Aorta (tissue), 5 donors: ENCODE measurements at regions of chr5 and their contacts with region 1.

Region 1: GRCh38 chr5:140710899-140711552 is 10.8 kb downstream of the ZMAT2 start:
- DNase-seq: peak; percentile 93 to 95
- ATAC-seq: peak; percentile 96
- H3K4me3 ChIP-seq: peak overlapping the region; percentile 30 to 62
- H3K27ac ChIP-seq: peak overlapping the region; percentile 1 to 89
- H3K4me1 ChIP-seq: no peaks in the 10 kb centered on the region
- H3K27me3 ChIP-seq: no peaks in the 10 kb centered on the region

Region 2: DNA sequence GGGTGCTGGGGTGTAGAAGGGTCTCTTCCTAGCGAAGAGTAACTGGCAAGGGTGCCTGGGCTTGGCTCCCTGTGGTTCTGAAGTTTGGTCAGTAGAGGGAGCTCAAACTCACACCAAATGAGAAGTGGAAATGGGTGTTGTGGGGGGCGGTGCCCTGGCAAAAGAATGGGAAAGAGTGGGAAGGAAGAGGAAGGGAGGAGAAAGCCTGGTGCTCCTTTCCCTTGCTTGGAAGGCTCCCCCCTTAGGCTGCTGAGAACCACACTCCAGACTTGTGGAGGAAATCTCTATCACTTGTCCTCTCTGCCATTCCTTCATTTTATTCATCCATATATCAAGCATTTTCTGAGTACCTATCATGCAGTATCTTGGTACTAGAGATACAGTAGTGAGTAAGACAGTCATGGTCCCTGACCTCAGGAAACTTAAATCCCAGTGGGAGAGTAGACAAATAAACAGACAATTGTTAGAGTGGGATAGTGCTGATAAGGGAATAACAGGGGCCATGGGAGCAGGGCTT is 338.0 kb before region 1 on chr5:
- intact Hi-C with region 1: loop called in 1 of 2 experiments (anchors 5 kb)
- DNase-seq: peak; percentile 85 to 89
- ATAC-seq: peak; percentile 89
- H3K4me3 ChIP-seq: no peak overlapping the region
- H3K27ac ChIP-seq: no peak overlapping the region
- H3K4me1 ChIP-seq: no peaks in the 10 kb centered on the region
- H3K27me3 ChIP-seq: no peaks in the 10 kb centered on the region

Region 3: DNA sequence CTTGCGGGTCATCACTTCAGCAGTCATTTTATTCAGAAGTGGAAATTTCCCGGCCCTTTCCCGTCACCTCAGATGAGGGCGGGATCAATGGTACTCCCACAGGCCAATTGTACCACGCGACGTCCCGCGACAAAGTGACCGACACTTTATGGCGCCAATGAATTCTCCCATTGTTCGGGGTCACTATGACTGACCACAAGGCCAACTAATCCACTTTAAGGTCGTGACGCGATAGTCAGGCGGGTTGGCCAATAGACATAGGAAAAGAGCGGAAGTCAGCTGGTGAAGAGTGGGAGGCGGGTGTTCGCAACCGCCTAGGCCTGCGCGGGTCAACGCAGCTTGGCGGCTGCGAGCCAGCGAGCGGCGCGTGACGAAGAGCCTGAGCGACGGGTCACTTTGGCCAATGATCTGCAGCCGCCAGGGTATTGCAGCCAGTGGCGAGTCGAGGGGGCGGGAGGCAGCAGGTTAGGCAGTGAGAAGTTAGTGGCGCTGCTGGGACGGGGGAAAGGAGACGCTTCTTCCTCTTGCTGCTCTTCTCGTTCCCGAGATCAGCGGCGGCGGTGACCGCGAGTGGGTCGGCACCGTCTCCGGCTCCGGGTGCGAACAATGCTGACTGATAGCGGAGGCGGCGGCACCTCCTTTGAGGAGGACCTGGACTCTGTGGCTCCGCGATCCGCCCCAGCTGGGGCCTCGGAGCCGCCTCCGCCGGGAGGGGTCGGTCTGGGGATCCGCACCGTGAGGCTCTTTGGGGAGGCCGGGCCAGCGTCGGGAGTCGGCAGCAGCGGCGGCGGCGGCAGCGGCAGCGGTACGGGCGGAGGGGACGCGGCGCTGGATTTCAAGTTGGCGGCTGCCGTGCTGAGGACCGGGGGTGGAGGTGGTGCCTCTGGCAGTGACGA is 309.4 kb before region 1 on chr5 and contains the start of gene ANKHD1:
- intact Hi-C with region 1: loop called in 1 of 2 experiments (anchors 10 kb)
- DNase-seq: peak; percentile 99
- ATAC-seq: peak; percentile 98
- H3K4me3 ChIP-seq: peak within 1 kb of the TSS; percentile 66 to 85
- H3K27ac ChIP-seq: peak within 1 kb of the TSS; percentile 17 to 94
- H3K4me1 ChIP-seq: peaks cover 0 to 3% of the 10 kb centered on the region in 2 donors
- H3K27me3 ChIP-seq: no peaks in the 10 kb centered on the region
- total RNA-seq, gene ANKHD1: 112 to 138 TPM

Region 4: DNA sequence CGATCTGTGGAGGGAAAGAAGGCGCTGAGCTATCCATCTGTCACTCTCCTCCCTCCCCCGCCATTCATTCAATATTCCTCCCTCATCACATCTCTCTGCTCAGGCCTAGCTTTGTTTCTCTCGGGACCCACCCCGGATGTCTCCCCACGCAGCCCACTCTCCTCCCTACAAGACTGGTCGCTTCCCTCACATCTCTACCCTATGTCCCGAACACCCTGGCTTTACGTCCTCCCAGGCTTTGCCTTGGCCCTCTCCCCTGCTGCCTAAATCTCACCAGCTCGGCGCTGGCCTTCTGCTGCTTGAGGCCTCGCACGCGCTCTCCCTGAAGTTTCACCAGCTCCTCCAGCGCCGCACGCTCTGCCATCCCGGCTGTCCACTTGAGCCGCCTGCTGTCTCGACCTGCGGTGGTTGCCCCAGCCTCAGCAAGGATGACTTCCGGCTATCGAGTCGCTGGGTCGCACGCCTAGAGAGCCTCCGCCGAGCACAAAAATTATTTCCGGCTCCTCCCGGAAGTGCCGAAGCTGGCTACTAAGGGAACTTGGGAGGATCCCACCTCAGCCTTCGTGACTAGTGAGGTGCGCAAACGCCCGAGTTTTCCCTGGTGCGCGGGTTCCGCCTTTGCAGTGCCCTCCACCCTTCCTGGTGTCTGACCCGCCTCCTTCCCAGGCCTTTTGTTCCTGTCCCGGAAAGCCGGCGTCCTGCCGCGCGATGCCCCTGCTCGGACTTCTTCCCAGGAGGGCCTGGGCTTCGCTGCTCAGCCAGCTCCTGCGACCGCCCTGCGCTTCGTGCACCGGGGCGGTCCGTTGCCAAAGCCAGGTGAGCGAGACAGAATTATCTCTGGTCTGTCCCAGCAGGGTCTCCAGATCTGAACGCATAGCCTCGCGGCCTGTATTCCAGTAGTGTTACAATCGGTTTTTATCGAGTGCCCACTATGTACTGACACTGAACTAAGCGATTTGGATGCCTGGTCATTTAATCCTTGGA is 19.8 kb before region 1 on chr5 and contains the starts of genes HARS1 and HARS2:
- intact Hi-C with region 1: loop called in 1 of 2 experiments (anchors 1 kb)
- DNase-seq: peak; percentile 94 to 95
- ATAC-seq: peak; percentile 97
- H3K4me3 ChIP-seq: peak within 1 kb of the TSS; percentile 59 to 93
- H3K27ac ChIP-seq: peak within 1 kb of the TSS in 1 of 2 donors; percentile 82
- H3K4me1 ChIP-seq: peaks cover 0 to 3% of the 10 kb centered on the region in 2 donors
- H3K27me3 ChIP-seq: no peaks in the 10 kb centered on the region
- total RNA-seq, gene HARS1: 48.6 to 49.3 TPM
- total RNA-seq, gene HARS2: 21.3 to 33.0 TPM